Dorsolateral prefrontal cortex (tissue), 120 donors: ENCODE measurements at regions of chr9 and their contacts with region 1.

Region 1: GRCh38 chr9:137694967-137695879 is 76.4 kb downstream of the EHMT1 start:
- DNase-seq: peak in 9 of 10 donors; percentile 41 to 80 (median 68)
- H3K4me3 ChIP-seq: peak overlapping the region in 2 of 59 donors; percentile 18 to 26
- H3K27ac ChIP-seq: peak overlapping the region in 45 of 59 donors; percentile 1 to 81 (median 63)
- H3K27me3 ChIP-seq: no peaks in the 10 kb centered on the region
- CTCF ChIP-seq: peak; percentile 22 to 90 (median 76)

Region 2: DNA sequence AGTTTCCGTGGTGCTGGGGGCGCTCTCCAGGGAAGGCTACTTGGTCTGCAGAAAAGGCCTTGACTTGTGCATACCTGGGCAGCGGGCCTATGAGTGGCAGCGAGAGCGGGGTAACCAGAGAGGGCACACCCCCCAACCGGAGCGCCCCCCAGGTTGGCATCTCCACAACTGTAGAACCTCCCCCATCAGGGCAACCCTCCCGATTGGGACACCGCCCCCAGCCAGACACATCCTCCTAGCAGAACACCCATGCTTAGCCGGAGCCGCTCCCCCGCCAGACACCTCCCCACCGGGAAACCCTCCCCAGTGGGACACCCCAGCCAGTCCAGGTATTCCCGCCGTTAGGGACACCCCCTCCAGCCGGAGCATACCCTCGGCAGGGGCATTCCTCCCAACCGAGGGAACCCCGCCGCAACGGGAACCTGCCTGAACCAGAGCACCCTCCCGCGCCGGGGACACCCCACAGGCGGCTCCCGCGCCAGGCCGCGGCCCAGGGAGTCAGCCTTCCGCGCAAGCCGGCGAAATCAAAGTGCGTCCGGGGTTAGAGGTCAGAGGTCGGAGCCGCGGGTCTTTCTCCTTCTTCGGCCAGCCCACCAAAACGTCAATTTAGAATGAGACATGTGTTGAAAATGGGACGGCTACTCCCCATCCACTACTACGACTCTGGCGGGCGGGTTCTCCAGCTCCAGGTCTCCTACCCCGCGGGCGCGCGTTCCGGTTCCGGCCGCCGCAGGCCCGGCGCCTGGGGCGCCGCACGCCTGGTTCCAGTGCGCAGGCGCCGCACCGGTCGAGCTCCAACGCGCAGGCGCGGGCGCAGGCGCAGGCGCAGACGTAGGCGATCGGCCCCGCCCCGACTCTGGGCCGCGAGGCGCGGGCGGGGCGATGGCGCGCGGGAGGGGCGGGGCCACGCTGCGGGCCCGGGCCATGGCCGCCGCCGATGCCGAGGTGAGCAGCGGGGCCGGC is 76.8 kb before region 1 on chr9 and contains the start of gene EHMT1:
- intact Hi-C with region 1: loop called in 1 of 2 experiments (anchors 2 kb)
- DNase-seq: peak in 9 of 10 donors; percentile 64 to 93 (median 76)
- H3K4me3 ChIP-seq: peak within 1 kb of the TSS; percentile 68 to 100 (median 95)
- H3K27ac ChIP-seq: peak within 1 kb of the TSS in 58 of 59 donors; percentile 38 to 97 (median 89)
- H3K27me3 ChIP-seq: no peaks in the 10 kb centered on the region
- CTCF ChIP-seq: peak in 12 of 56 donors; percentile 7 to 33 (median 12)
- total RNA-seq, gene EHMT1: 47.9 to 151 (median 85.0) TPM

Region 3: DNA sequence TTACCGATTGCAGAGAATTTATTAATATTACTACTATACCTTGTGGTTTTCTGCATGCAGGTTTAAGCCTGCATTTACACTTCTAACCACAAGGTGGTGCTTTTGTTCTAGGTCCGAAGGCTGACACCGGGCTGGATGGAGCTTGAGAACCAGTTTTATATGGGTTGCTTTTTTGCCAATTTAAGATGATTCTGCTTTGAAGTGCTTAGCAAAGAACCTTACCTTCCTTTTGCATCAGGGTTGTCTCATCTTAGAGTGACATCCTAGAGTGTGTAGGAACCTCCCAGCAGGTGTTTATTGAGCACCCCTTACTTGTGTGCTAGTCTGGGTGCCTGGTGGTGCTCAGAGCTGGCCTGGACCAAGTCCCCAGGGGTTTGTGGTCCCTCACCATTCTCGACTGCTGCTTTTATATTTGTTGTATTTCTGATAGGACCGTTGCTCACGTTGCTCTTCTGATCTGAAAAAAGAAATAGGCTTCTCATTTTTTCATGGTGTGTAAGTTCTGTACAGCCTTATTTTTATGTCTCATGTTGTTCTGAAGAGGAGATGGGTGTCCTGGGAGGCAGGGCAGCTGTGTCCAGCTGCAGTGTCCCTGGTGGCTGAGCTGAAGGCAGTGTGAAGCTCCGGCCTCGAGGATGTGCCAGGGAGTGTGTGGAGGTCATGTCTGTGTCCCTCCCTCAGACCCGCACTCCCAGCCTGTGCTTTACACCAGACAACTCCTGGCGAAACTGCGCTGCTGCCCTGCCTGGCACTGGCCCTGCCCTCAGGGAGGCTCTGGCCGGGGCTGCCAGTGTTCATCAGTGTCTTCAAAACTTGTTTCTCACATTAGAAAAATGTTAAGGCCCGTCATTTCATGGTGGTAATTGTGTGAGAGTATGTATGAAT is 22.1 kb before region 1 on chr9:
- intact Hi-C with region 1: loop called in 1 of 2 experiments (anchors 2 kb)
- DNase-seq: peak in 2 of 10 donors; percentile 56 to 65
- H3K4me3 ChIP-seq: no peak overlapping the region
- H3K27ac ChIP-seq: peak overlapping the region in 32 of 59 donors; percentile 2 to 81 (median 39)
- H3K27me3 ChIP-seq: no peaks in the 10 kb centered on the region
- CTCF ChIP-seq: peak; percentile 82 to 97 (median 91)